A549 (cell line): ENCODE measurements at regions of chr4 and their contacts with region 1.

Region 1: GRCh38 chr4:51906167-51906958 is 63.4 kb downstream of the DCUN1D4 start:
- DNase-seq: no peak
- ATAC-seq: no peak
- H3K4me3 ChIP-seq: no peak overlapping the region
- H3K27ac ChIP-seq: 0 out of 6 replicates have a peak overlapping the region, but pooled peaks of 1 of the 2 experiments have one; percentile 18
- H3K4me1 ChIP-seq: peaks cover 30% of the 10 kb centered on the region
- CTCF ChIP-seq: no peak
- EP300 ChIP-seq: no peak
- POLR2A ChIP-seq: no peak
- RAD21 ChIP-seq: no peak

Region 2: GRCh38 chr4:51895813-51896408 is 10.5 kb before region 1 on chr4:
- CTCF ChIA-PET with region 1: interaction called, 10 read pairs
- POLR2A ChIA-PET with region 1: no interaction called
- DNase-seq: peak; percentile 41 to 70
- ATAC-seq: peak; percentile 91 to 97
- H3K4me3 ChIP-seq: no peak overlapping the region
- H3K27ac ChIP-seq: peak overlapping the region; percentile 72 to 85
- H3K4me1 ChIP-seq: peaks cover 28% of the 10 kb centered on the region
- CTCF ChIP-seq: peak; percentile 62
- EP300 ChIP-seq: no peak
- POLR2A ChIP-seq: no peak
- RAD21 ChIP-seq: peak; percentile 34 to 37; a peak in 4 of 5 replicates